Posterior vena cava (tissue), 2 donors: ENCODE measurements at regions of chr9 and their contacts with region 1.

Region 1: DNA sequence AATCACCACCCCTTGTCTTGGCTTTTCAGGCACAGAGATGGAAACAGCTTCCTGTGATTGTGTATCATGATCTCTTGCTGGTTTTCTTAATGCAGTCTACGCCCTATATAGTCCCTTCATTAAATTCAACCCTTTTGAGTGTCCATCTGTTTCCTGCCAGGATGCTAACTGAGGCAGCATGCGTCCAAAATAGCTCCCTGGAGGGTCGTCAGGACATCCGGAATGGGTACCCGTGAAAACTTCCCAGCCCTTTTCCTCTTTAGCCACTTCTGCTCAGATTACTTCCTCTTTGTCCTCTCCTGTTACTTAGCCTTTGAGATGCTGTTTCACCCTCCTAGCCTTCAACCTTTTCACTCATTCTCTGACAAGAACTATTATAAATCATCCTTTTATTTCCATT is 79.8 kb upstream of the KLF9 start:
- DNase-seq: no peak

Region 2: GRCh38 chr9:70352802-70353201 is 141.4 kb before region 1 on chr9:
- intact Hi-C with region 1: loop called in 1 of 2 experiments (anchors 10 kb)
- DNase-seq: no peak

Region 3: GRCh38 chr9:70519912-70520724 is 25.9 kb after region 1 on chr9:
- intact Hi-C with region 1: no loop called
- DNase-seq: no peak

Region 4: DNA sequence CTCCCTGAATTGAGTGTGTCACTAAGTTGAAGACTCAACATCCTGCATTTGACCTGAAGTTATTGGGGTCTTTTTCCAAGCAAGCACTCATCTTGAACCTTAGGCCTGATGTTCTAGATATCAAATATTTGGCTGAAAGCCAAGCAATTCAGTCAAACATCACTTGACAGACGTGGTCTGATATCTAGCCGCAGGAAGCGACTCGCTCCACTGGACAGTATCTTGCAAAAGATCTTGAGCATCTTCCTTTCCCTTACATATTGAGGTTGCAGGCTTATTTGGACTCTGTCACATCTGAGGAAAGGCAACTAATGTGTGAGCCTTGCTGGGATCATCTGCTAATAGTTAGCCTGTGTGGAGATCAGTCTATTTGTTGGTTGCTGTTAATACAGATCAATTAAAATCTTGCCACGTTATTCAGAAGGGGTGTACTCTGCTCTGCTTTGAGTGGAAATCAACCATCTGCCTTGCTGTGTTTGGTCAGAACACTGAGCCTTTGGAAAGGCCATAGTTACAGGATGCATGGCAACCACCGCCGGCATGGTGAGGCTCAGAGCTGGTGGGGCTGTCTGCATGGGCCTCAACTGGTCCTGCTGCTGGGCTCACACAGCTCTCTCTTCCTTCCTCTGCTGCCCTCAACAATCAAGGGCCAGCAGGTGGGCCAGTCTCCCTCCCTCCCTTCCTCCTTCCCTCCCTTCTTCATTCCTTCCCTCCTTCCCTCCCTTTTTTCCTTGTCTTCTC is 87.2 kb after region 1 on chr9:
- intact Hi-C with region 1: no loop called
- DNase-seq: no peak

Region 5: DNA sequence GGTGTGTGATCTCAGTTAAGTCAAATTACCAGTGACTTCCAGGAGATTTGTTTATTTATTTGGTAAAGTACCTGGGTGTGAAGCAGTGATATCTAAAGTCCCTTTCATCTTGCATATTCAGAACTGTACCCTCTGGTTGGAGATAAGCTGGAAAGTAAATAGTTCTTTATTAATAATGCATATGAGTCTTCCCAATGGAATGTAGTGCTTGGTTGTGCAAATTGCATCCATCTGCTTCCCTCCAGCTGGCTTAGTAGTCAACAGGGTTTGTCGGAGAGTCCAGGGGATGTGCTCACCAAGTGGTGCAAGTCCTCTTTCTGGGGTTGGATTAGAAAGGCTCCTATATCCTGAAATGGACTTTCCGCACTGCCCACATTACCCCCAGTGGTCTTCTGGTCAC is 585.2 kb after region 1 on chr9:
- intact Hi-C with region 1: no loop called
- DNase-seq: no peak